CD8-positive, alpha-beta T cell (primary cell): ENCODE measurements at regions of chr3 and their contacts with region 1.

Region 1: DNA sequence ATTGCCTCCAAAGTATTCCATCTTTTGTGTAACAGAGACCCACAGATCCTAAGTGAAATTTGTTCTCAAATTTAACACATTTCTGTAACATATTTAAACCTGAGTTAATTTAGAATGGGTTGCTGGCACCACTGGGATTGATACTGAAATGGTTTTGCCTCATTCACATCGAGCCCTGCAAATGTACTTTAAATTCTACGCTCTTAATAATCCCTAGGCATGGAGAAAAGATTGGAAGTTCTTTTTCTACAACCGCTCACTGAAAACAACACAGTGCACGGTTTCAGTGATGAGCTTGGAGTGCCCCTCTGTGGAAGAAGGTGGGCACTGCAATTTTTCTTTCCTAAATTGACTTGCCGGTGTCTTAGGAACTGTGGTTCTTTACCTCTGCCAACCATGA is 109.9 kb upstream of the ATP11B start:
- DNase-seq: peak; percentile 9 to 74 (median 51)
- ATAC-seq: peak; percentile 84
- H3K4me3 ChIP-seq: peak overlapping the region; percentile 49 to 56
- H3K4me3 Mint-ChIP-seq: peak overlapping the region; percentile 67
- H3K27ac ChIP-seq: no peak overlapping the region
- H3K27ac Mint-ChIP-seq: no peak overlapping the region
- H3K4me1 ChIP-seq: peaks cover 9% of the 10 kb centered on the region
- H3K4me1 Mint-ChIP-seq: peaks cover 8% of the 10 kb centered on the region
- H3K27me3 ChIP-seq: peaks cover 0 to 15% of the 10 kb centered on the region in 2 experiments
- H3K27me3 Mint-ChIP-seq: peaks cover 29% of the 10 kb centered on the region
- CTCF ChIP-seq: peak; percentile 95

Region 2: GRCh38 chr3:180690061-180690460 is 1993.4 kb before region 1 on chr3:
- CTCF ChIA-PET with region 1: no interaction called
- POLR2A ChIA-PET with region 1: no interaction called
- intact Hi-C with region 1: loop called in 1 of 2 experiments (anchors 10 kb)
- DNase-seq: no peak
- ATAC-seq: no peak
- H3K4me3 ChIP-seq: no peak overlapping the region
- H3K4me3 Mint-ChIP-seq: no peak overlapping the region
- H3K27ac ChIP-seq: no peak overlapping the region
- H3K27ac Mint-ChIP-seq: no peak overlapping the region
- H3K4me1 ChIP-seq: no peaks in the 10 kb centered on the region
- H3K4me1 Mint-ChIP-seq: no peaks in the 10 kb centered on the region
- H3K27me3 ChIP-seq: peaks cover 0 to 3% of the 10 kb centered on the region in 2 experiments
- H3K27me3 Mint-ChIP-seq: peaks cover 24% of the 10 kb centered on the region
- CTCF ChIP-seq: no peak

Region 3: DNA sequence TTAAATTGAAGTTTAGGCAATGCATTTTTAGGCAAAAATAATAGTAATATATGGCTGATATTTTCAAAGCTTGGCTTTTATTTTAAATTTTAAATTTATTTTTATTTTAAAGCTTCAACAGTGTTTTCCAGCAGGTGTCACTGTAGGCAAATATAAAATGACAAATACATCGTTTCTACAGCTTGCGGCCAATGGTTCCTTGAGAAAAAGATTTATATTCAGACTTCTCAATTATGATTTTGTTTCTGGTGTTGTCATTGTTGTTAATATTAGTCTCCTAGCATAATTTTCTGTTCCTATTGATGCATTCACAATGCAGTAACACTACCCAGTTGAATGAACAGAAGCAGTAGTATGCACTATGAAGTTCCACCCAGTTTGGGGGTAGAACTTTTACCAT is 1473.2 kb before region 1 on chr3:
- CTCF ChIA-PET with region 1: interaction called, 5 read pairs
- POLR2A ChIA-PET with region 1: no interaction called
- intact Hi-C with region 1: loop called (anchors 2 to 5 kb)
- DNase-seq: no peak
- ATAC-seq: no peak
- H3K4me3 ChIP-seq: no peak overlapping the region
- H3K4me3 Mint-ChIP-seq: no peak overlapping the region
- H3K27ac ChIP-seq: no peak overlapping the region
- H3K27ac Mint-ChIP-seq: no peak overlapping the region
- H3K4me1 ChIP-seq: no peaks in the 10 kb centered on the region
- H3K4me1 Mint-ChIP-seq: no peaks in the 10 kb centered on the region
- H3K27me3 ChIP-seq: no peaks in the 10 kb centered on the region
- H3K27me3 Mint-ChIP-seq: peaks cover 13% of the 10 kb centered on the region
- CTCF ChIP-seq: no peak

Region 4: GRCh38 chr3:181326637-181327223 is 1356.7 kb before region 1 on chr3:
- CTCF ChIA-PET with region 1: interaction called, 23 read pairs
- POLR2A ChIA-PET with region 1: no interaction called
- intact Hi-C with region 1: loop called in 1 of 2 experiments (anchors 1 kb)
- DNase-seq: peak in 2 of 9 experiments; percentile 2 to 19
- ATAC-seq: no peak
- H3K4me3 ChIP-seq: no peak overlapping the region
- H3K4me3 Mint-ChIP-seq: no peak overlapping the region
- H3K27ac ChIP-seq: no peak overlapping the region
- H3K27ac Mint-ChIP-seq: no peak overlapping the region
- H3K4me1 ChIP-seq: no peaks in the 10 kb centered on the region
- H3K4me1 Mint-ChIP-seq: no peaks in the 10 kb centered on the region
- H3K27me3 ChIP-seq: no peaks in the 10 kb centered on the region
- H3K27me3 Mint-ChIP-seq: no peaks in the 10 kb centered on the region
- CTCF ChIP-seq: no peak

Region 5: DNA sequence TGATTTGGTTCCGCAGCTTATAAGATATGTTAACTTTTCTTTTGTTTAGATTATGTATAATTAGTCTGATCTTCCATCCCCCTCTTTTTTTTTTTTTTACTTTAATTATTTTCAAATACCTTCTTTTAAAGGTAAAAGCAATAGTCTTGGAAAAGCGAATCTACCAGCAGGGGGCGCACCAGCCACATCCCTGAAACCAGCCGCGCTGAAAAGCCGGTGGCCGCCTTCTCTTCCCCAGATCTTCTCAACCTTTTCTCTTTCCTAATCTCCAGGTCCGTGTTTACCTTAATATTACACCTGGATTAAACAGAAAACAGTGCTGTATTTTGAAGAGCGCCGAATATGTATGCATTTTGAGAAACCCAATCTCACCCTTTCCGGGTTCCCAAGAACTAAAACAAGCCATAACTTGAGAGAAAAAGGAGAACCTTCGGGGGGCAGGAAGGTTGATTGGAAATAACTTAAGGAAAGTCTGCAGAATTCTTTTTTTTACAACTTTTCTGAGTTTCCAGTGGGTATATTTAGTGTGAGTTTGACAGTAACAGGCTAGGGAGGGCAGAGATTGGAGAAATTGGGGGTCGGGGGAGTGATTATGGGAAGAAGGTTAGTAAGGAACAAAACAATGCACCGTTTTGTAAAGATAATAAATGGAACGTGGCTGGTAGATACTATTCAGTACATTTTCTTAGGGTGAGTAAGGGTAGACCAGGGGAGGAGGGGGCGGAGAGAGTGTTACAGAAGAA is 973.7 kb before region 1 on chr3:
- CTCF ChIA-PET with region 1: interaction called, 6 read pairs
- POLR2A ChIA-PET with region 1: no interaction called
- intact Hi-C with region 1: loop called (anchors 1 kb)
- DNase-seq: peak in 7 of 9 experiments; percentile 26 to 60 (median 44)
- ATAC-seq: no peak
- H3K4me3 ChIP-seq: no peak overlapping the region
- H3K4me3 Mint-ChIP-seq: peak overlapping the region; percentile 62
- H3K27ac ChIP-seq: no peak overlapping the region
- H3K27ac Mint-ChIP-seq: no peak overlapping the region
- H3K4me1 ChIP-seq: peaks cover 21% of the 10 kb centered on the region
- H3K4me1 Mint-ChIP-seq: peaks cover 7% of the 10 kb centered on the region
- H3K27me3 ChIP-seq: peaks cover 29 to 71% of the 10 kb centered on the region in 2 experiments
- H3K27me3 Mint-ChIP-seq: peaks cover 68% of the 10 kb centered on the region
- CTCF ChIP-seq: peak; percentile 74

Region 6: DNA sequence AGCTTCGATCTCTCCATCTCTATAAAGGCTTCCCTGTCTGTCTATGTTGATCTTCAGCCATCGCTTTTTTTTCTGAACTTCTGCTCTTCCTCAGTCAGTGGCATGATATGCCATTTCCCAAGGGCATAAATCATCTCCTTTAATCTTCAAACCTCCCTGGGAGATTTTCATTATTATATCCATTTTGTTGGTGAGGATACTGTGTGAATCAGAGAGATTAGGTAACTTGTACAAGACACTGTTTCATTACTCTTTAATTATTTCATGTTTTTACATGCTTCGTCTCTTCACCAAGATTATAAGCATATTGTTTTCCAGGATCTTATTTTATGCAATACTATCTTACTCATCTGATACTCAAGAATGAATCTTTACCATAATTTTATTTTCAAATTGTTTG is 14.9 kb before region 1 on chr3:
- CTCF ChIA-PET with region 1: no interaction called
- POLR2A ChIA-PET with region 1: no interaction called
- intact Hi-C with region 1: no loop called
- DNase-seq: no peak
- ATAC-seq: no peak
- H3K4me3 ChIP-seq: no peak overlapping the region
- H3K4me3 Mint-ChIP-seq: no peak overlapping the region
- H3K27ac ChIP-seq: no peak overlapping the region
- H3K27ac Mint-ChIP-seq: no peak overlapping the region
- H3K4me1 ChIP-seq: no peaks in the 10 kb centered on the region
- H3K4me1 Mint-ChIP-seq: no peaks in the 10 kb centered on the region
- H3K27me3 ChIP-seq: peaks cover 0 to 3% of the 10 kb centered on the region in 2 experiments
- H3K27me3 Mint-ChIP-seq: peaks cover 20% of the 10 kb centered on the region
- CTCF ChIP-seq: no peak

Region 7: DNA sequence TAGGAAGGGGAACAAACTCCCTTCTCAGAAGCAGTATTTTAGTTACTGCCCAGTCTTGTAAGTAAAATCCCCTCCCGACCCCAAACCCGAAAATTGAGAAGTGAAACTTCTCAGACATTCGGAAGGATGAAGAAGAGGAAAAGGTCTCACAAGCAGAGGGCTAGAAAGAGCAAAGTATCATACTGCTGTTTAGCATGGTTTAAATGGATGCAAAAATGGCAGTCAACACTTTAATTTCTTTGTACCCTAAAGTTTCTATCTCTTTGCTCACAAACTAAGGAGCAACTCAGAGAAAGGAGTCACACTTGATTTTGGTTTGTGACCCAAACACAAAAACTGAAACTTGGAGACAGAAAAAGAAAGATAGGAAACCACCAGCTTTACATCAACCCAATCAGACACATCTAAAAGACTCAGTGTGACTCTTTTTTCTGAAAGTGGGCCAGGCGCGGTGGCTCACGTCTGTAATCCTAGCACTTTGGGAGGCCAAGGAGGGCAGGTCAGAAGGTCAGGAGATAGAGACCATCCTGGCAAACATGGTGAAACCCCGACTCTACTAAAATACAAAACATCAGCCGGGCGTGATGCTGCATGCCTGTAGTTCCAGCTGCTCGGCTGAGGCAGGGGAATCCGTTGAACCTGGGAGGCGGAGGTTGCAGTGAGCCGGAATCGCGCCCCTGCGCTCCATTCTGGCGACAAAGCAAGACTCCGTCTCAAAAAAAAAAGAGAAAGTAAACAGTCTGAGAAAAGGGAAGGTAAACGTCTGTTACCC is 46.6 kb after region 1 on chr3:
- CTCF ChIA-PET with region 1: no interaction called
- POLR2A ChIA-PET with region 1: no interaction called
- intact Hi-C with region 1: no loop called
- DNase-seq: no peak
- ATAC-seq: no peak
- H3K4me3 ChIP-seq: no peak overlapping the region
- H3K4me3 Mint-ChIP-seq: no peak overlapping the region
- H3K27ac ChIP-seq: no peak overlapping the region
- H3K27ac Mint-ChIP-seq: no peak overlapping the region
- H3K4me1 ChIP-seq: no peaks in the 10 kb centered on the region
- H3K4me1 Mint-ChIP-seq: no peaks in the 10 kb centered on the region
- H3K27me3 ChIP-seq: no peaks in the 10 kb centered on the region
- H3K27me3 Mint-ChIP-seq: peaks cover 10% of the 10 kb centered on the region
- CTCF ChIP-seq: no peak